ENCODE measurements at regions of chr6 and their contacts with region 1.

Region 1: DNA sequence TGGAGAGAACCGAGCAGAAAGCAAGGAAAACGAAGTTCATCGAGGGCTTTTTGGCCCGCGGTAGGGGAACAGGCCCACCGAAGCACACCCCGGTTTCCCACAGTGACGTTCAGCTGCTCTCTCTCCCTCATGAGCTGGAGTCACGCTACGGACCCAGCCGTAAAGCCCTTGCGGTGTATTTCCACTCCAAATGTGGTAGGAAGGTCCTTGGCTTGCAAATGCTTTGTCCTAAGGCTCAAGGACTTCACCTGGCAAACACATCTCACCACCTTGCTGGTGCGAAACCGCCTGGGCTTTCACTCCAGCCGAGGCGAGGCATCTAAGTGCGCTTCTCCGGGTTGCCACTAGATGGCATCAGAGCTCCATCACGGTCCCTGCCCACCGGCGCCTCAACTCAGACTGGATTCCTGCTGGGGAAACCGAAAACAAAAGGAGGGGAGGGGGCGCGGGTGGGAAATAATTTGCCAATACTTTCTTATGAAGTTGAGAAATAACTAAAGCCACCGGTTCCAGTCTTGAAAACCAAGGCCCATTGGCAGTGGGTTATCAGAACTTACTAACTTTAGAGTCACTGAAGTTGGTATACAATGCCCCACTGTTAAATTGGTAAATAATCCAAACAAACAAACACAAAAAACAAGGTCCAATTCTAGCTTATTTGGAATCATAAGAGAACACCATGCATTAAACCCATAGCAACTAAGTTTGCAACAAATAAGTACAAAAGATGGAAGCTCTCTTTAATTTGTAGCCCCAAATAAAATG is 13.4 kb upstream of the FOXC1 start:
- DNase-seq: no peak
- H3K4me3 ChIP-seq: peak overlapping the region; percentile 58
- H3K27ac ChIP-seq: no peak overlapping the region
- H3K27me3 ChIP-seq: peaks cover 40% of the 10 kb centered on the region
- CTCF ChIP-seq: peak; percentile 93

Region 2: DNA sequence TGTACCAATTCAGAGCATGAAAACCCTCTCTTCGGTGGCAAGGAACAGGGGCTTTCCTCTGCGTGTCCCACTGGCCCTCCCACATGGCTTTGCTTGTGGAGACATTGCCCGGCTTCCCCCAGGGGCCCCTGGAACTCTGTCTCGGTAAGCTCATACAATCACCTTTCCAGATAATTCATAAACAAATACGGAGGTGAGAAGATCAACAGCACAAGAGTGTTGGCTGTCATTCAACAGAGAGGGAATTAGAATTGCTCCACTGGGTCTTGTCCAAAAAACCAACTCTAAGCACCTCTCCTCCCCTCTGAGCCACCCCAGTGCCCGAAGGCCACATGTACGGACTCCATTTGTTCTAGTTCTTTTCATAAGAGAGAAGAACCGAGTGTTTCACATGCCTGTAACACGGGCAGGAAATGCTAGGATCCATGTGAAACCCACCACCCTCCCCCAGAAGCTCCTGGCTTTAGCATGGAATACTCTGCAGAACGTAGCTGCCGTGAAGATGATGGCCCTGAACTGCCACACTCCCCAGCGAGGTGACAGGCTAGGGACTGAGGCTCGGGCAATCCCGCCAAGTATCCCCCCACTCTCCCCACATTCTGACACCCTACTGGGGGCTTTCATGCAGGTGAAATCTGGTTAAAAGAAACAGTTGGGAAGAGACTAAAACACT is 11.1 kb before region 1 on chr6:
- CTCF ChIA-PET with region 1: interaction called, 10 read pairs
- POLR2A ChIA-PET with region 1: no interaction called
- DNase-seq: no peak
- H3K4me3 ChIP-seq: no peak overlapping the region
- H3K27ac ChIP-seq: no peak overlapping the region
- H3K27me3 ChIP-seq: peaks cover 31% of the 10 kb centered on the region
- CTCF ChIP-seq: no peak

Region 3: GRCh38 chr6:2353412-2354137 is 757.3 kb after region 1 on chr6:
- CTCF ChIA-PET with region 1: interaction called, 54 read pairs
- POLR2A ChIA-PET with region 1: no interaction called
- DNase-seq: peak; percentile 45
- H3K4me3 ChIP-seq: no peak overlapping the region
- H3K27ac ChIP-seq: no peak overlapping the region
- H3K27me3 ChIP-seq: no peaks in the 10 kb centered on the region
- CTCF ChIP-seq: peak; percentile 80

Region 4: DNA sequence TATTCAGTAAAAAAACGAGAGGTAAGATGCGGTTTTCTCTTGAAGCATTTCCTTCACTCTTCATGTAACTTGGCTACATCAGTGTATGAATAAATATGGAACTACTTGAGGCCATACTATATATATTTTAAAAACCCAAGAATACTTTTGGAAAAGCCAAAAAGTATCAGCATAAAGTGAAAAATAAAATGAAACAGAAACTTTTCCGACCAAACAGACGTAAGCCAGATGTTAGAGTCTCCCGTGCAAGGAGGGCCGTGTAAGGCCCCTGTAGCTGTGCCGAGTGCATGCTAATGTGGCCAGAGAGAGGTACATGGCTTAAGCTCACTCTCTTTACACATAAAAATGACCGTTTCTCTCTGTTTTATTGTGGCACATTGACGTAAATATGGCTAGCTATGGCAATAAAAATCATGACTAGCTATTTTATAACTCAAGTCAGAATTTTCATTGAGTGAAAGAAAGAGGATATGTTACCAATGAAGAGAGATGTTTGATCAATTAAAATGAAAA is 789.3 kb after region 1 on chr6:
- CTCF ChIA-PET with region 1: no interaction called
- POLR2A ChIA-PET with region 1: no interaction called
- DNase-seq: no peak
- H3K4me3 ChIP-seq: no peak overlapping the region
- H3K27ac ChIP-seq: no peak overlapping the region
- H3K27me3 ChIP-seq: no peaks in the 10 kb centered on the region
- CTCF ChIP-seq: no peak

Region 5: GRCh38 chr6:2448820-2449571 is 852.7 kb after region 1 on chr6:
- CTCF ChIA-PET with region 1: interaction called, 58 read pairs
- POLR2A ChIA-PET with region 1: no interaction called
- DNase-seq: peak; percentile 63
- H3K4me3 ChIP-seq: peak overlapping the region; percentile 41
- H3K27ac ChIP-seq: no peak overlapping the region
- H3K27me3 ChIP-seq: peaks cover 11% of the 10 kb centered on the region
- CTCF ChIP-seq: peak; percentile 83

Region 6: DNA sequence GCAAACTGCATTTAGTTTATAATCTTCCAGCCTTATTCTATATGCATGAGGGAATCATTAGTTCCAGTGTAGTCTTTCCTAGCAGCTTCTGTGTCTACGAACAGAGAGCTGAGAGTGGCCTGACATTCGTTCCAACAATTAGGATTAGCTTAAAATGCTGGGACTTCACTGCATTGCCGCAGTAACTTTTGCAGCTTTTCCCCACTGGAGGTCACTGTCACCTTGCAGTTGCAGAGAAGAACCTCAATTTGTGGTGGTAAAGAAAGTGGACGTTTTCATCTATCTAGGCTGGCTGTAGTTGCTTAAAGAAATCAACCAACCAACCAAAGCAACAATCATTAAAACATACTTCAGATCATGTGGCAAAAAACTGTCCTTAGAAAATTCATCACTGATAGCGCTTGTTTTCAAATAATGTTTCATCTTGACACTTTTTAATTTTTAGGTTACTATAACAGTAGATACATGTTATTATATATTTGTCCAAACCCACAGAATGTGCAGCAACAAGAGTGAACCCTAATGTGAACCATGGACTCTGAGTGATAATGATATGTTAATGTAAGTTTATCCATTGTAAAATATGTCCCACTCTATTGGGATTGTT is 1142.2 kb after region 1 on chr6:
- CTCF ChIA-PET with region 1: interaction called, 10 read pairs
- POLR2A ChIA-PET with region 1: no interaction called
- DNase-seq: peak; percentile 45
- H3K4me3 ChIP-seq: no peak overlapping the region
- H3K27ac ChIP-seq: no peak overlapping the region
- H3K27me3 ChIP-seq: no peaks in the 10 kb centered on the region
- CTCF ChIP-seq: peak; percentile 83